ENCODE measurements at regions of chr11 and their contacts with region 1.

Region 1: DNA sequence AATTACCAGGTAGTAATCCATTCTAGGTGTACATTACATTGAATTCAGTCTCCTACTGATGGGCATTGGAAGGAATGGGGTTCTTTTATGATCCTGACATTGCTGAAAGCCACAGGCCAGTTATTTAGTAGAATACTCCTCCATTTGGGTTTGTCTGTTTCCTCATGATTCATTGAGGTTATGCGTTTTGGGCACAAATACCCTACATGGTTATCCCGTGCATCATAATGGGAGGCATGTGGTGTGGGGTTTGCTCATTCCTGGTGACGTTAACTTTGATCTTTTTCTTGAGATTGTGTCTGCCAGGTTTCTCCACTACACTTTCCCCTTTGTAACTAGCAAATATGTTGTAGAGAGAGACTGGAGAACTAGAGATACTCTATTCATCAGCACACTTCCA is 5.5 kb downstream of the FOLR3 start:
- DNase-seq: peak; percentile 72
- H3K4me3 Mint-ChIP-seq: no peak overlapping the region
- H3K27ac Mint-ChIP-seq: peak overlapping the region; percentile 13
- H3K4me1 Mint-ChIP-seq: peaks cover 21% of the 10 kb centered on the region
- H3K27me3 Mint-ChIP-seq: peaks cover 11% of the 10 kb centered on the region

Region 2: DNA sequence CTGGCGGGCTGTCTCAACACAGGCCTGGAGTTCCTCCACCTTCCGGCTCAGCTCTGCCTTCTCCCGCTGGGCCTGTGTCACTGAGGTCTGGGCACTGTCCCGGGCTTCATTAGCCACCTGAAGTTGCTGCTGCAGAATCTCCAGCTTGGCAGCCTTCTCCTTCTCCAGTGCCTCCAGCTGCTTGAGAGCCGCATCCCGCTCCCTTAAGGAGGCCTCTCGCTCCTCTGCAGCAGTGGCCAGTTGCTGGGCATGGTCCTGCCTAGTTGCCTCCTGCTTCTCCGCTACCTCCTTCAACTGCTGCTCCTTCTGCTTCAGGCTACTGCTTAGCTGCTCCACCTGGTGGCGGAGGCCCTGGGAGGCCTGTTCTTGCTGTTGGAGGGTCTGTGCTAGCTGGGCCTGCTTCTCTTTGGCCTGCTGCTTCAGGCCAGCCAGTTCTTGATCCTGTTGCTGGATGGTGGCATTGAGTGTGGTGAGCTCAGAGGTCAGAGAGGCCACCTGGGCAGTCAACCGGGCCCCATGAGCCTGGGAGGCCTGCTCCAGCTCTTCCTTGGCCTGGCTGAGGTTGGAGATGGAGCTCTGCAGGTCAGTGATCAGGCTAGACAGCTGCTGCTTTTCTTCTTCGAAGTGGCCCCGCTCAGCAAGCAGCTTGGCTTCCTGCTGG is 125.4 kb before region 1 on chr11:
- CTCF ChIA-PET with region 1: interaction called, 118 read pairs
- POLR2A ChIA-PET with region 1: no interaction called
- intact Hi-C with region 1: no loop called
- DNase-seq: peak; percentile 19
- H3K4me3 Mint-ChIP-seq: no peak overlapping the region
- H3K27ac Mint-ChIP-seq: peak overlapping the region; percentile 18
- H3K4me1 Mint-ChIP-seq: no peaks in the 10 kb centered on the region
- H3K27me3 Mint-ChIP-seq: no peaks in the 10 kb centered on the region

Region 3: DNA sequence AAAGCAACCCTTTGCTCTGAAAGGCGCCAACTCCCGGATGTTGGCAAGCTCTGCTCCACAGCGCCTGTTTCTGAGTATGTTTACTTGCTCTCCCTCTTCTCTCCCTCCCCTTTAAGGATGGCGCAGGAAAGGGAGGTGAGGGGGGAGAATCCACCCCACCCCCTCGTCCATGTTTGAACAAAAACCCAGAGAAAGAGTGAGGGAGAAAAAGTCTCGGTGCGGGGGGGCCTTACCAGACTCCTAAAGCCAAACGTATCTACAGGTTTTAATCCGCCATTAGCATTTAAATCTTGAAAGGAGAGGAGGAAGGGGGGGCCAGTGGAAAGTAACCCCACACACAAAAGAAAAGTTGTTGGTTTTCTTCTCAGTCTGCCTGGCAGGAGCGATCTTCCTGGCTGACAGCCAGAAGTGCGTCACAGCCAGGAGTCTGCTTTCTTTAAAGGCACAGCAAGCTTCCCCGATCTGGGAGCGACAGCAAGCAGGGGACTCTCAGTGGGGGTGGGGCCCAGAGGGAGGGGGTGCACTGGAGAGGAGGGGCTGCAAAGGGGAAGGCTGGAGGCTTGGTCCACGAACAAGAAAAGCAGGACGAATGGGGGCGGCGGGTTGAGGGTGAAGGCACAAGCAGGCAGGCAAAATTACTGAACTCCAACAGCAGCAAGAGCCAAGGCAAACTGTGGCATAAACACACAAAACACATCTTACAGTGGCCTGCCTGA is 100.2 kb before region 1 on chr11:
- CTCF ChIA-PET with region 1: interaction called, 21 read pairs
- POLR2A ChIA-PET with region 1: no interaction called
- intact Hi-C with region 1: no loop called
- DNase-seq: peak; percentile 83
- H3K4me3 Mint-ChIP-seq: no peak overlapping the region
- H3K27ac Mint-ChIP-seq: no peak overlapping the region
- H3K4me1 Mint-ChIP-seq: peaks cover 34% of the 10 kb centered on the region
- H3K27me3 Mint-ChIP-seq: no peaks in the 10 kb centered on the region

Region 4: DNA sequence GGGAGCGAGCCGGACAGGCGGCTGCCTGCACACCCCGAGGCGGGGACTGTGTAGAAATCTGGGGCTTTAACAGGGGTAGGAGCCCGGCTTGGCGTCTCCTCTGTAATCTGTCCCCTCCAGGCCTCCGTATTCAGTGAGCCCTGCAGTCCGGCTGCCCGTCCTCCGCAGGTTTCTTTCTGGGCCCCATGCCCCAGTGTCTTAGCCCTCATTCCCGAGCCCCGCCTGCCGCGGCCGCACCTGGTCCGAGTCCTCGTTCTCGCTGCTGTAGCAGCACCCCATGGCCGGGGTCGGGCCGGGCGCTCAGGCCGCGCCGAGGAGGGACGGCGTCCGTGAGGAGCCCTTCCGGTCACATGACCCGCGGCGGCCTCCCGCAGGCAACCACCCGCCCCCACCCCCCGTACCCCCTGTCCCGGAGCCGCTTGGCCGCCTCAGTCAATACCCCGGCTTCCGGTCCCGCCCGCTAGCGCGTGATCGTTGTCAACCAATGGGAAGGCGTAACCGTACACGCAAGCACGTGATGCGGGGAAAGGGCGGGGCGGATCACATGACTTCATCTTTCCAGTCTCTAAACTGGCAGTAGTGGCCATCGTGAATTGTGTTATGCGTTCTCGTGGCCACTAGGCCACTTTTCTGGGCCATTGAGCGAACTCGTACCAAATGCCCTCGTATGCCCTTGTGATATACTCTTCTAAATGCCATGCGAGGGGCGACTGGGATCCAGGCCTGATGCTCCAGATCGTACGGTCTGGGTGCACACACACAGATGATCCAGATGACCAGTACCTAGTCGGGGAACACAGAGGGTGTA is 37.9 kb before region 1 on chr11 and contains the start of gene LAMTOR1:
- CTCF ChIA-PET with region 1: interaction called, 9 read pairs
- POLR2A ChIA-PET with region 1: interaction called, 3 read pairs
- intact Hi-C with region 1: loop called (anchors 1 kb)
- DNase-seq: peak; percentile 99
- H3K4me3 Mint-ChIP-seq: peak within 1 kb of the TSS; percentile 80
- H3K27ac Mint-ChIP-seq: peak within 1 kb of the TSS; percentile 83
- H3K4me1 Mint-ChIP-seq: peaks cover 37% of the 10 kb centered on the region
- H3K27me3 Mint-ChIP-seq: no peaks in the 10 kb centered on the region
- total RNA-seq, gene LAMTOR1: 54.3 to 56.2 TPM

Region 5: DNA sequence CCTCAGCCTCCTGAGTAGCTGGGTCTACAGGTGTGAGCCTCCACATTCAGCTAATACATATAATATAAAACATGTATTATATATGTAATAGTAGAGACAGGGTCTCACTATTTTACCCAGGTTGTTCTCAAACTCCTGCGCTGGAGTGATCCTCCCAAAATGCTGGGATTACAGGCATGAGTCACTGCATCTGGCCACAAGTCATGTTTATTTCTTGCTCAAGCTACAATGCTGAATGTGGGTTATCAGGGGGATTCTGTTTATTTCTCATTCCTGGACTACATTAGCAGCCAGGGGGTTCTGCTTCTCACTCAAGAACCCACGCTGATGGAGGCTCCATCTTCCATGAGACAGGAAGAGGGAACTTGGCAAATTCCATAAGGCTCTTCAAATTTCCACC is 19.3 kb after region 1 on chr11:
- CTCF ChIA-PET with region 1: interaction called, 51 read pairs
- POLR2A ChIA-PET with region 1: no interaction called
- intact Hi-C with region 1: no loop called
- DNase-seq: no peak
- H3K4me3 Mint-ChIP-seq: no peak overlapping the region
- H3K27ac Mint-ChIP-seq: no peak overlapping the region
- H3K4me1 Mint-ChIP-seq: no peaks in the 10 kb centered on the region
- H3K27me3 Mint-ChIP-seq: peaks cover 12% of the 10 kb centered on the region

Region 6: GRCh38 chr11:72430741-72431570 is 289.9 kb after region 1 on chr11:
- CTCF ChIA-PET with region 1: interaction called, 21 read pairs
- POLR2A ChIA-PET with region 1: no interaction called
- intact Hi-C with region 1: no loop called
- DNase-seq: peak; percentile 51
- H3K4me3 Mint-ChIP-seq: no peak overlapping the region
- H3K27ac Mint-ChIP-seq: no peak overlapping the region
- H3K4me1 Mint-ChIP-seq: peaks cover 30% of the 10 kb centered on the region
- H3K27me3 Mint-ChIP-seq: no peaks in the 10 kb centered on the region

Measured in activated CD4-positive, alpha-beta memory T cell treated with anti-CD3 and anti-CD28 coated beads for 36 hours (primary cell).